ENCODE measurements at regions of chr2 and their contacts with region 1.

Region 1: GRCh38 chr2:233331536-233331935 is 22.8 kb upstream of the DGKD start:
- DNase-seq: peak; percentile 59 to 86 (median 84)
- H3K4me3 ChIP-seq: peak overlapping the region; percentile 12
- H3K4me3 Mint-ChIP-seq: peak overlapping the region; percentile 5 to 81 (median 72)
- H3K27ac ChIP-seq: peak overlapping the region; percentile 48
- H3K27ac Mint-ChIP-seq: peak overlapping the region; percentile 85 to 99 (median 98)
- H3K4me1 ChIP-seq: peaks cover 59% of the 10 kb centered on the region
- H3K4me1 Mint-ChIP-seq: peaks cover 32 to 62% (median 50%) of the 10 kb centered on the region in 3 donors
- H3K27me3 ChIP-seq: no peaks in the 10 kb centered on the region
- H3K27me3 Mint-ChIP-seq: no peaks in the 10 kb centered on the region

Region 2: GRCh38 chr2:233267516-233268245 is 63.9 kb before region 1 on chr2:
- CTCF ChIA-PET with region 1: interaction called, 10 read pairs
- POLR2A ChIA-PET with region 1: interaction called, 12 read pairs
- DNase-seq: peak; percentile 72 to 93 (median 92)
- H3K4me3 ChIP-seq: peak overlapping the region; percentile 42
- H3K4me3 Mint-ChIP-seq: peak overlapping the region; percentile 54 to 86 (median 78)
- H3K27ac ChIP-seq: peak overlapping the region; percentile 75
- H3K27ac Mint-ChIP-seq: peak overlapping the region; percentile 96 to 100 (median 98)
- H3K4me1 ChIP-seq: peaks cover 69% of the 10 kb centered on the region
- H3K4me1 Mint-ChIP-seq: peaks cover 71 to 80% (median 77%) of the 10 kb centered on the region in 3 donors
- H3K27me3 ChIP-seq: no peaks in the 10 kb centered on the region
- H3K27me3 Mint-ChIP-seq: no peaks in the 10 kb centered on the region

Region 3: GRCh38 chr2:233353769-233354499 is 22.4 kb after region 1 on chr2 and contains the start of gene DGKD:
- CTCF ChIA-PET with region 1: interaction called, 18 read pairs
- POLR2A ChIA-PET with region 1: interaction called, 10 read pairs
- DNase-seq: peak; percentile 61 to 77 (median 70)
- H3K4me3 ChIP-seq: peak within 1 kb of the TSS; percentile 75
- H3K4me3 Mint-ChIP-seq: peak within 1 kb of the TSS; percentile 92 to 96 (median 94)
- H3K27ac ChIP-seq: no peak within 1 kb of the TSS
- H3K27ac Mint-ChIP-seq: peak within 1 kb of the TSS; percentile 78 to 99 (median 91)
- H3K4me1 ChIP-seq: peaks cover 47% of the 10 kb centered on the region
- H3K4me1 Mint-ChIP-seq: peaks cover 57 to 72% (median 60%) of the 10 kb centered on the region in 3 donors
- H3K27me3 ChIP-seq: no peaks in the 10 kb centered on the region
- H3K27me3 Mint-ChIP-seq: peaks cover 0 to 3% of the 10 kb centered on the region in 2 donors
- total RNA-seq, gene DGKD: 54.2 to 61.9 TPM

Measured in CD8-positive, alpha-beta memory T cell (primary cell).